ENCODE measurements at regions of chr9 and their contacts with region 1.

Region 1: GRCh38 chr9:111743275-111743674 is 51.5 kb downstream of the SHOC1 start:
- DNase-seq: peak; percentile 45 to 83
- ATAC-seq: peak; percentile 100
- H3K4me3 ChIP-seq: no peak overlapping the region
- H3K27ac ChIP-seq: peak overlapping the region; percentile 85 to 86; a peak in 5 of 6 replicates
- H3K4me1 ChIP-seq: peaks cover 23% of the 10 kb centered on the region
- CTCF ChIP-seq: no peak
- EP300 ChIP-seq: peak; percentile 29 to 66; a peak in 2 of 5 replicates
- POLR2A ChIP-seq: no peak
- RAD21 ChIP-seq: 0 out of 5 replicates have a peak, but pooled peaks of 1 of the 2 experiments have one; percentile 22

Region 2: GRCh38 chr9:111759762-111760639 is 16.7 kb after region 1 on chr9:
- CTCF ChIA-PET with region 1: interaction called, 10 read pairs
- POLR2A ChIA-PET with region 1: interaction called, 8 read pairs
- DNase-seq: peak; percentile 41 to 84
- ATAC-seq: peak; percentile 93
- H3K4me3 ChIP-seq: no peak overlapping the region
- H3K27ac ChIP-seq: peak overlapping the region; percentile 5 to 22; a peak in 5 of 6 replicates
- H3K4me1 ChIP-seq: no peaks in the 10 kb centered on the region; the same call in 2 of the 3 replicates
- CTCF ChIP-seq: peak; percentile 88
- EP300 ChIP-seq: no peak
- POLR2A ChIP-seq: no peak
- RAD21 ChIP-seq: peak; percentile 97 to 98